Transverse colon (tissue), 4 donors: ENCODE measurements at regions of chr7 and their contacts with region 1.

Region 1: GRCh38 chr7:158751751-158752150 is 47.1 kb upstream of the NCAPG2 start:
- DNase-seq: no peak
- H3K4me3 ChIP-seq: no peak overlapping the region
- H3K27ac ChIP-seq: no peak overlapping the region
- H3K4me1 ChIP-seq: no peaks in the 10 kb centered on the region
- H3K27me3 ChIP-seq: no peaks in the 10 kb centered on the region
- CTCF ChIP-seq: no peak
- EP300 ChIP-seq: no peak
- POLR2A ChIP-seq: no peak

Region 2: DNA sequence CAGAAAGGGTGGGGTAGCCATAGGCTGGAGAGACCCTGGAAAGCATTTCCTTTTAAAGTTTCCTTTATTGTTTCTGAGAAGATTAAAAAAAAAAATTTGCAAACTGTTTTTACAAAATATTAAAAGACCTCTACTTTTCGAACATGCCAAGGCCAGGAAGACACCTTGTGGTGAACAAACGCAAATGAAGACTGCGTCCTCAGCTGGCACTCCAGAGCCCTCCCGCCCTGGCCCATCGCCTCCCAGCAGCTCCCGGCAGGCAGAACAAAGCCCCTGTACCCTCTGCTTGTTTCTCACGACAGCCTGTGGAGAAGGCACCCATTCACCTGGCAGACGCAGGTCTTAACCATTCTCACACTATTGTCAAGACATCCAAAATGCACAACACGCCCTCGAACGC is 21.2 kb after region 1 on chr7:
- in situ Hi-C with region 1: no loop called
- intact Hi-C with region 1: loop called (anchors 1 kb)
- DNase-seq: no peak
- H3K4me3 ChIP-seq: no peak overlapping the region
- H3K27ac ChIP-seq: no peak overlapping the region
- H3K4me1 ChIP-seq: peaks cover 0 to 25% (median 15%) of the 10 kb centered on the region in 4 donors
- H3K27me3 ChIP-seq: no peaks in the 10 kb centered on the region
- CTCF ChIP-seq: no peak
- EP300 ChIP-seq: no peak
- POLR2A ChIP-seq: no peak

Region 3: DNA sequence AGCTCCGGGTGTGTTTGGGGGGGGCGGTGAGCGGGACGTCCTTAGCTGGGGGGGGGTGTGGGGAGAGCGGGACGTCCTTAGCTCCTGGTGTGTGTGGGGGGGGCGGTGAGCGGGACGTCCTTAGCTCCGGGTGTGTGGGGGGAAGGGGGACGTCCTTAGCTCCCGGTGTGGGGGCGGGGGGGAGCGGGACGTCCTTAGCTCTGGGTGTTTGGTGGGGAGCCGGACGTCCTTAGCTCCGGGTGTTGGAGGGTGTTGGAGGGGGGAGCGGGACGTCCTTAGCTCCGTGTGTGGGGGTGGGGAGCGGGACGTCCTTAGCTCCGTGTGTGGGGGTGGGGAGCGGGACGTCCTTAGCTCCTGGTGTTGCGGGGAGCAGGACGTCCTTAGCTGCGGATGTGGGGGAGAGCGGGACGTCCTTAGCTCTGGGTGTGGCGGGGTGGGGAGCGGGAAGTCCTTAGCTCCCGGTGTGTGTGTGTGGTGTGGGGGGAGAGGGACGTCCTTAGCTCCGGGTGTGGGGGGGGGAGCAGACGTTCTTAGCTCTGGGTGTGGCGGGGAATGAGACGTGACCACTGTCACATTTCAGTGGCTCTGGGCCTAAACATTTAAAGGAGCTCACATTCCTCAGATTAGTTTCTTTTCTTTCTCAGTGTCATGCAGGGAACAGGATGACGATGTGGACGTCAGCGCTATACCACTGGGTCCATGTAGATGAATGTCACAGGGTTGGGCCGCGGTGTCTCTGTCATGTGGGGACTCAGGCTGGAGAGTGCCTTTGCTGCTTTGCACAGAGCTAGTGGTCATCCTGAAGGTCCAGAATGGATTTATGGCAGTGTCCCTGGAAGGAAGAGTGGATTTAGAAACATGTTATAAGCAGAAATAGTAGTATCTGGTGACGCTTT is 112.1 kb after region 1 on chr7:
- in situ Hi-C with region 1: no loop called
- intact Hi-C with region 1: no loop called
- DNase-seq: peak; percentile 80
- H3K4me3 ChIP-seq: peak overlapping the region; percentile 42 to 65 (median 46)
- H3K27ac ChIP-seq: peak overlapping the region; percentile 85 to 92 (median 88)
- H3K4me1 ChIP-seq: peaks cover 6 to 28% (median 26%) of the 10 kb centered on the region in 4 donors
- H3K27me3 ChIP-seq: no peaks in the 10 kb centered on the region
- CTCF ChIP-seq: no peak
- EP300 ChIP-seq: peak; percentile 14
- POLR2A ChIP-seq: peak; percentile 61